Activated CD4-positive, alpha-beta T cell treated with anti-CD3 and anti-CD28 coated beads, Interleukin-2, amount 10 ng/mL, durations not matched to agents 7 days and 5 days (primary cell): ENCODE measurements at regions of chr17 and their contacts with region 1.

Region 1: DNA sequence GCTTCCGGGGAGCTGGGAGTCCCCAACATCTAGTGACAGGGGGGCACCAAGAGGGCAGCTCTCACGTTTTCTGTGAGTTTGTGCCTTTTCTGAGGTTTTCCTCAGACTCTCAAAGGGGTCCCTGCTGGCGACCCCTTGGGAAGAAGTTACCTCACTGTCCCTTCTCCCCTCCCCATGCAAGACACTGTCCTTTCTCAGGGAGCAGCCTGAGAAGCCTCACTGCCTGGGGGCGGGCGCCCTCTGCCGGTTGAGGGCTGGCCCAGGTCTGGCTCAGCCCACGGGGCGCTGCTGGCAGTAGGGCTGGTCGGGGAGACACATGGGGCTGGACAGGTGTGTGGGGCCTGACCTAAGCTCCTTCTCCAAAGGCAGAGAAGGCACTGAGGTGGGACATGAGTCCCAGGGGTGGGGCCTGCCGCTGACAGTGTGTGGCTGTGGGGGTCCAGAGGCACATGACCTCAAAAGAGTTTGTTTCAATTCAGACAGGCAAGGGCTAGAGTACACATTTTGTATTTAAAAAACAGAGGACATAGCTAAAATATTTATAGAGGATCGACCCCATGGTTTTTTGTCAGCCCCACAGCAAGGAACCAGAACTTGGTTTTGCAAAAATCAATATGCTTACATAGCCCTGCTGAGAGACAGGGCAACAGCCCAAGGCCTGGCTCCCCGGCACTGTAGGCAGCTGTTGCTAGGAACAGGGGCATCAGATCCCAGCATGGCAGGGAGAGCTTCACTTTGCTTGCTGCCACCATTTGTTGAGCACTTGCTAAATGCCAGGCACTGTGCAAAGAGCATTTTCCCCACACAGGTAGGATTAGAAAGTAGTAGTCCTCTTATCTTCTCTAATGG is 18.5 kb upstream of the ALDH3A1 start:
- DNase-seq: peak; percentile 76
- H3K4me3 Mint-ChIP-seq: no peak overlapping the region
- H3K27ac Mint-ChIP-seq: no peak overlapping the region
- H3K4me1 Mint-ChIP-seq: peaks cover 31% of the 10 kb centered on the region
- H3K27me3 Mint-ChIP-seq: peaks cover 2% of the 10 kb centered on the region

Region 2: DNA sequence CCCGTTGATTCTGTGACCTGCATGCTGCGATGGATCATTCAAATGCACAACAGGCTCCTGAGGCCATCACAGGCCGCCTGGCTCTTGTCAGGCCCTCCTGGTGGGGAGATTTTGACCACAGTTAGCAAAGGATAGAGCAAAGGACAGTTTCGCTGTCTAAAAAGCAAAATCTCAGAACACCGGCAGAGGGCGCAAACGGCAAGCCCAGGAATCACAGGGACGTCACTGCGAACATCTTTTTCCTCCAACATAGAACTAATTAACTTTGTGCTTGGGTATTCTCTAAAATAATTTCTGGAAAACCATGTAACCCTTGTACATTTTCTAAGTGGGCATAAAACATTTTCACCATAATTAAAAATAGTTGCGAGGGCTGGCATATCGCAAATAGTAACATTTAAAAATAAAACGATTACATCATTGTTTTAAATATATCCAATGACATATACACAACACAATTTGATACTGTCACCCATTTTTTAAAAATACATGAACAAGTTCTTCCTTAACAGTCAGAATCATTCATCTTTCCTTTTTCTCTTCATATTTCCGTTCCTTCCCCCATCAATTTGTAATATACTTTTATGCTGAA is 252.7 kb before region 1 on chr17:
- CTCF ChIA-PET with region 1: interaction called, 12 read pairs
- POLR2A ChIA-PET with region 1: no interaction called
- DNase-seq: peak; percentile 70
- H3K4me3 Mint-ChIP-seq: no peak overlapping the region
- H3K27ac Mint-ChIP-seq: no peak overlapping the region
- H3K4me1 Mint-ChIP-seq: no peaks in the 10 kb centered on the region
- H3K27me3 Mint-ChIP-seq: no peaks in the 10 kb centered on the region

Region 3: DNA sequence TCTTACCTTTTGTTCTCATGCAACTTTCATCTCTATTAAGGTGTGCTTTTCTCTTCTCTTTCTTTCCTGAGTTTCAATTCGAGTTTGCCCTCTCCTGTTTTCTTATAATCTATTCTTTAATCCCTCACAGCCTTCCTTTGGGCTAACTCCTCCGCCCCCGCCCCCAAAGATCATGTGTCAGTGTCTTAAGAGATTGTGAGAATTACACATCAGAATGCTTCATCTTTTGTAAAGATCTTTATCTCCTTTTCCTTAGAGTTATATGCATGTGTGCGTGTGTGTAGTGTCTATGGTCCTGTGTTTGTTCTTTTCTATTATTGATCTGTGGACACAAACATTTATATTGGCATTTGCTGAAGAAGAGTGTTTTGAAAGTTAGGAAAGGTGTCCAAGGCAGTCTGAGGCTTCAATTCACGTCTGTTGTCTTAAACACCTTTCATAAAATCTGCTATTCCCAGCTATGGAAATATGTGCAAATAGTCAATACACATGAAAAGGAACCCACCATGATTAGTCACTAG is 124.2 kb before region 1 on chr17:
- CTCF ChIA-PET with region 1: no interaction called
- POLR2A ChIA-PET with region 1: no interaction called
- DNase-seq: no peak
- H3K4me3 Mint-ChIP-seq: no peak overlapping the region
- H3K27ac Mint-ChIP-seq: no peak overlapping the region
- H3K4me1 Mint-ChIP-seq: peaks cover 24% of the 10 kb centered on the region
- H3K27me3 Mint-ChIP-seq: peaks cover 36% of the 10 kb centered on the region

Region 4: DNA sequence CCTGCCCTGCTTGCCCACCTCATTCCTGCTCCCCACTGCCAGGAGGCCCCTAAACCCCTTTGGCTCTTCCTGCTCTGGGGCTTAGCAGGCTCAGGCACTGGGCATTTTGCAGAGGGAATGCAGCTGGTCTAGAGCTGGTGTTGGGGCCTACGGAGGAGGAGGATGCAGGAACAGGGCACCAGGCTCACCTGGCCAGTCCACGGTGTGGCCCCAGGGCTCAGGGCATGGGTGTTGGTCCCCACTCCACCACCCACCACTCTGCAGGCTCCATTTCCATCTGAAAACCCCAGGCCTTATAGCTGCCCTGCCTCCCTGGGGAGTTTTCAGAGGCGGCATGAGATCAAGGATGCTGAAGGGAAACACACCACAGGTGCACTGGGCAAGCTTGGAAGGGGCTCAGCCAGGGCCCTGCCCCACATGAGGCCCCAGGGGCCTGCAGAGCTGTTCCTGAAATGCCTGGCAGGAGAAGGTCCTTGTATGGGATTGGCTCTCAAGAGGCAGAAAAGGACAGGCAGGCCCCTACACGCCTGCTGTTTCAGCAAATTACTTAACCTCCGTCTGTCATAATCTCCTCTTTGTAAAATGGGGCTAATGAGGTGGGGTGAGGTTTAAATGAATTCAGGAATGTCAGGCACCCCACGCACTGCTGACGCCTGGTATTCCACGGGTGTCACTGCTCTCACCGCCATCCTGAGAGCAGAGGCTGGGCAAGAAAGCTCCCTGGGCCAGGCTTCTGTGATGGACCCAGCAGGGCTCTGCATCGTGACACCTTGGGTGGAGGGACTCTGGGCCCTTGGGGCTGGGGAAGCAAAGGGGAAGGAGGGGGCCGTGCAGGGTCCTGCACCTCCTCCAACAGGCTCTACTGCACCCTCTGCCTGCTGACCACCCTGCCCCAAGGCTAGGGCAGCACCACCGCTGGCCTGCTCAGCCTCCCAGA is 59.6 kb before region 1 on chr17:
- CTCF ChIA-PET with region 1: no interaction called
- POLR2A ChIA-PET with region 1: no interaction called
- DNase-seq: no peak
- H3K4me3 Mint-ChIP-seq: no peak overlapping the region
- H3K27ac Mint-ChIP-seq: no peak overlapping the region
- H3K4me1 Mint-ChIP-seq: no peaks in the 10 kb centered on the region
- H3K27me3 Mint-ChIP-seq: no peaks in the 10 kb centered on the region

Region 5: DNA sequence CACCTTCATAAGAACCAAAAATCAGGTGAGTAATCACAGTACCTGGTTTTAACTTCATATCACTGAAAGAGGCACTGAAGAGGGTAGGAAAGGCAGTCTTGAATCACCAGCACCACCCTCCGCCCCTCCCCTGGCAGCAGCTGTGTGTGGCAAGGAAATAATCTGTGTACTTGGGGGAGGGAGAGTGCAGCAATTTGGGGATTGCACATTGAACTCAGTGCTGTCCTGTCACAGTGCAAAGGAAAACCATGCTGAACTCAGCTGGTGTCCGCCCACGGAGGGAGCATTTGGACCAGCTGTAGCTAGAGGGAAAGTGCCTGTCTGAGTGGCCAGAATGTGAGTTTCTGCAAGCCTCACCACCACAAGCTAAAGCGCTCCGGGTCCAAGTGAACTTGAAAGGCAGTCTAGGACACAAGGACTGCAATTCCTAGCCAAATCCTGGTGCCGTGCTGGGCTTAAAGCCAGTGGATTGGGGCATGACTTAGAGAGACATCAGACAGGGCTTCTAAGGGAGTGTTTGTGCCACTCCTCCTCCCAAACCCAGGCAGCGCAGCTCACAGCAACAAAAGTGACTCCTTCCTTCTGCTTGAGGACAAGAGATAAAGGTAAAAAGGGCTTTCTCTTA is 21.2 kb after region 1 on chr17:
- CTCF ChIA-PET with region 1: no interaction called
- POLR2A ChIA-PET with region 1: no interaction called
- DNase-seq: no peak
- H3K4me3 Mint-ChIP-seq: no peak overlapping the region
- H3K27ac Mint-ChIP-seq: no peak overlapping the region
- H3K4me1 Mint-ChIP-seq: no peaks in the 10 kb centered on the region
- H3K27me3 Mint-ChIP-seq: no peaks in the 10 kb centered on the region